HCT116 (cell line): ENCODE measurements at regions of chr12 and their contacts with region 1.

Region 1: GRCh38 chr12:98532681-98533304 is 17.4 kb downstream of the TMPO start:
- DNase-seq: peak; percentile 60
- ATAC-seq: peak; percentile 87
- H3K4me3 ChIP-seq: no peak overlapping the region
- H3K27ac ChIP-seq: no peak overlapping the region
- H3K4me1 ChIP-seq: no peaks in the 10 kb centered on the region
- H3K27me3 ChIP-seq: no peaks in the 10 kb centered on the region
- CTCF ChIP-seq: peak; percentile 59 to 80 (median 74); a peak in 5 of 6 replicates
- POLR2A ChIP-seq: no peak
- RAD21 ChIP-seq: peak; percentile 48

Region 2: DNA sequence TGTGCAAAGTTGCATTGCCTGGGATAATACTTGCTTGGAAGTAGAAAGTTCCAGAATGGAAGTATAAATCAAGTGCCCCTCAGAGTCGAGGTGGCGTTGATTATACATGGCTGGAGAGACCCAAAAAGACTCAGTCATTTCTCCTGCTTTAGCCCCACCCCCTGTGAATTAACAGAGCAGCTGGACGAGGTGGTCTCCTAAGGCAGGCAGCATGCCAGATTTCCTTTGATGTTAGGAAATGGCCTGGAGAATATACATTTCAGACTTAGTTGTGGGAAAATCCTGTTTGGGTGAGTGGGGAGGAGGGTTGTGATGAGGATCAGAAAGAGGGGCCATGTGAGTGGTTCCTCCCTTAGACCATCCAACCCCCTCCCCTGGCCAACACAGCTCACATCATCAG is 423.5 kb before region 1 on chr12:
- CTCF ChIA-PET with region 1: no interaction called
- POLR2A ChIA-PET with region 1: no interaction called
- RAD21 ChIA-PET with region 1: no interaction called
- intact Hi-C with region 1: no loop called
- DNase-seq: no peak
- ATAC-seq: no peak
- H3K4me3 ChIP-seq: no peak overlapping the region
- H3K27ac ChIP-seq: no peak overlapping the region
- H3K4me1 ChIP-seq: no peaks in the 10 kb centered on the region
- H3K27me3 ChIP-seq: peaks cover 25% of the 10 kb centered on the region
- CTCF ChIP-seq: no peak
- POLR2A ChIP-seq: no peak
- RAD21 ChIP-seq: no peak

Region 3: GRCh38 chr12:98424726-98425401 is 107.9 kb before region 1 on chr12:
- CTCF ChIA-PET with region 1: no interaction called
- POLR2A ChIA-PET with region 1: no interaction called
- RAD21 ChIA-PET with region 1: no interaction called
- intact Hi-C with region 1: loop called (anchors 5 kb)
- DNase-seq: peak; percentile 57
- ATAC-seq: peak; percentile 83
- H3K4me3 ChIP-seq: no peak overlapping the region
- H3K27ac ChIP-seq: no peak overlapping the region
- H3K4me1 ChIP-seq: peaks cover 3 to 16% of the 10 kb centered on the region in 2 experiments; a peak in 3 of 4 replicates
- H3K27me3 ChIP-seq: no peaks in the 10 kb centered on the region
- CTCF ChIP-seq: peak; percentile 64 to 81 (median 79)
- POLR2A ChIP-seq: no peak
- RAD21 ChIP-seq: peak; percentile 78

Region 4: DNA sequence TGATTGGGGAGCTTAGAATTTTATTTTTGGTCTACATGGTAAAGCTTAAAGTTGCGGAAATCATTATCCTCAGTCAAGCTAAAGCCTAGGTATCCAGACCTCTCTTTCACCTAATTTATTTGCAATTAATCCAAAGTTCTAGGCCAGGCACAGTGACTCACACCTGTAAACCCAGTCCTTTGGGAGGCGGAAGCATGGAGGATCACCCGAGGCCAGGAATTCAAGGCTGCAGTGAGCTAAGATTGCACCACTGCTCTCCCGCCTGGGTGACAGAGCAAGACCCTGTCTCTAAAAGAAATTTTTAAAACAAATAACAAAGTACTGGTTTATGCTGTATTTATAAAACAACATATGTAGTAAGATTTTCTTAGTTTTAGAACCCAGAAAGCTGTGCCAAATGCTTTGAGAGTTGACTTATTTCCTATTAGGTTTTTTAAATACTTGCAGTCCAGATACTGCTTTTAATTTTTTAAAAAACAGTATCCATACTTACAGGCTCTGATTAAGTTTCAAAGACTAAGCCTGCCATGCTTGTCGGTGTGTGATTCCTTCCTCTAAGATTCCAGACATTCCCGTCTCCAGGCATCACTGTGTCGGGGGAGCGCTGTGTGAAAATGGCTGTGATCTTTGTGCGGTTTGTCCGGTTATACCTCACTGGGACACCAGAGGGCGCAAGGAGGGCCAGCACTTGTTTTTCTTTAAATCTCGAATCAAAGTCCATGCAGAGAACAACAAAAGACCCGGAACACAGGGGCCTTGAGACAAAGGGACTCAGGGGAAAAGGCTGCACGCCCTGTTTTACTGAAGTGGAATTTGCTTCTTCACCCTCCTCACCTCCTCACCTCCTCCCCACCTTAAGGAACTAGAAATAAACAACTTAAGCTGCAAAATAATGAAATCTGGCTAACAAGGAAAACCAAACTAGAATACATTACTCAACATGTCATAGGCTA is 42.0 kb before region 1 on chr12:
- CTCF ChIA-PET with region 1: interaction called, 5 read pairs
- POLR2A ChIA-PET with region 1: no interaction called
- RAD21 ChIA-PET with region 1: no interaction called
- intact Hi-C with region 1: loop called (anchors 5 kb)
- DNase-seq: peak; percentile 81
- ATAC-seq: peak; percentile 87
- H3K4me3 ChIP-seq: peak overlapping the region in 1 of 2 experiments; percentile 1; a peak in 1 of 4 replicates
- H3K27ac ChIP-seq: peak overlapping the region; percentile 57; the same call in 1 of the 2 replicates
- H3K4me1 ChIP-seq: peaks cover 21 to 27% of the 10 kb centered on the region in 2 experiments
- H3K27me3 ChIP-seq: no peaks in the 10 kb centered on the region
- CTCF ChIP-seq: peak; percentile 86 to 94 (median 88)
- POLR2A ChIP-seq: no peak
- RAD21 ChIP-seq: peak; percentile 82

Region 5: DNA sequence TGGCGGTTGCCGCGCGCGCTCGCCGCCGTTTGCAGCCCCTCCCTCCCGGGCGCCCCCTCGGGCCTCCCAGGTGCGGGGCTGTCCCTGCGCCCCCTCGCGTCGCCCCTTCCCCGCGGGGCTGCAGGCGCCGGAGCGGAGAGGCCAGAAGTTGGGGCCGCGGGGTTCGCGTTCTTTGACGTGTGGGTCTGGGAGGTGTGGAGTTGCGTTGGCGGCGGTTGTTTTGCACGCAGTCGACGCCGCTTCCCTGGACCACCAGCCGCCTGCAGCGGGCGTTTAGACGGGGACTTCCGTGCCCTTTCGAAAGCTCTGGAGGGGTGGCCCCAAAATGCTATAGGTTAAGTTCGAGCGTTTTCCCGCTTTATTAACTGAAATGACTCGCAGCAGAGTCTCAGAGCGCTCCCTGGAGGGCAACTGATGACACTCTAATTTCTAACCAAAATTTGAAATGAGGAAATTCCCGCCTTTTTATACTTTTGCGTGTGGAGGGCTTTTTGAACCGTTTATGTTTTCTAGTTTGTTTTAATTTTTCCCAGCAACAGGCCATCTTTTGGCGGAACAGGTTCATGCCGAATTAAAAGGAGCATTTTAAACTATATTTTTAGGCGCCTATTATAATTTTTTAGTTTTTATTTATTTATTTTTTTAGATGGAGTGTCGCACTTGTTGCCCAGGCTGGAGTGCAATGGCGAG is 16.5 kb before region 1 on chr12:
- CTCF ChIA-PET with region 1: interaction called, 16 read pairs
- POLR2A ChIA-PET with region 1: interaction called, 3 read pairs
- RAD21 ChIA-PET with region 1: no interaction called
- intact Hi-C with region 1: no loop called
- DNase-seq: peak; percentile 74
- ATAC-seq: peak; percentile 60
- H3K4me3 ChIP-seq: peak overlapping the region; percentile 75 to 85
- H3K27ac ChIP-seq: peak overlapping the region; percentile 98
- H3K4me1 ChIP-seq: peaks cover 8 to 18% of the 10 kb centered on the region in 2 experiments
- H3K27me3 ChIP-seq: no peaks in the 10 kb centered on the region
- CTCF ChIP-seq: peak; percentile 58 to 82 (median 73)
- POLR2A ChIP-seq: no peak
- RAD21 ChIP-seq: peak; percentile 89

Region 6: DNA sequence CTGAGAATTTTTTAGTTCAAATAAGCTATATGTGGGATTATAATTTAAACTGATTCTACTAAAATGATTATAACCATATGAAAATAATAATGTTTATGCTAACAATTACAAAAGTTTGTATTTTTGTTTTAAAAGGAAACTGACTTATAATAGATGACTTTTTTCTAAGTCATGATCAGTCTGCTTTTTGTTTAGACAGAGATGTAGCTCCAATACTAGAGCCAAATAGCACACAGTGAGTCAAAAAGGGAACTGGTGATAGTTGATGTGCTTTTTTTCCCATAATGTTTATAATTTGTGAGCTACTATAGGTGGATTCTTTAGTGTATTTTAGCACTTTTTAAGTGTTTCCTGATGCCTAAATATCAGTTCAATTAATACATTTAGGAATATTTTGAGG is 10.9 kb after region 1 on chr12:
- CTCF ChIA-PET with region 1: interaction called, 10 read pairs
- POLR2A ChIA-PET with region 1: no interaction called
- RAD21 ChIA-PET with region 1: no interaction called
- intact Hi-C with region 1: no loop called
- DNase-seq: no peak
- ATAC-seq: no peak
- H3K4me3 ChIP-seq: no peak overlapping the region
- H3K27ac ChIP-seq: no peak overlapping the region
- H3K4me1 ChIP-seq: no peaks in the 10 kb centered on the region
- H3K27me3 ChIP-seq: no peaks in the 10 kb centered on the region
- CTCF ChIP-seq: no peak
- POLR2A ChIP-seq: no peak
- RAD21 ChIP-seq: no peak

Region 7: GRCh38 chr12:98998697-98999299 is 466.0 kb after region 1 on chr12:
- CTCF ChIA-PET with region 1: no interaction called
- POLR2A ChIA-PET with region 1: no interaction called
- RAD21 ChIA-PET with region 1: no interaction called
- intact Hi-C with region 1: loop called (anchors 2 kb)
- DNase-seq: peak; percentile 12
- ATAC-seq: peak; percentile 80
- H3K4me3 ChIP-seq: no peak overlapping the region
- H3K27ac ChIP-seq: no peak overlapping the region
- H3K4me1 ChIP-seq: no peaks in the 10 kb centered on the region
- H3K27me3 ChIP-seq: peaks cover 27% of the 10 kb centered on the region
- CTCF ChIP-seq: peak; percentile 44 to 71 (median 69)
- POLR2A ChIP-seq: no peak
- RAD21 ChIP-seq: peak; percentile 81